Caco-2 (cell line): ENCODE measurements at regions of chr6 and their contacts with region 1.

Region 1: DNA sequence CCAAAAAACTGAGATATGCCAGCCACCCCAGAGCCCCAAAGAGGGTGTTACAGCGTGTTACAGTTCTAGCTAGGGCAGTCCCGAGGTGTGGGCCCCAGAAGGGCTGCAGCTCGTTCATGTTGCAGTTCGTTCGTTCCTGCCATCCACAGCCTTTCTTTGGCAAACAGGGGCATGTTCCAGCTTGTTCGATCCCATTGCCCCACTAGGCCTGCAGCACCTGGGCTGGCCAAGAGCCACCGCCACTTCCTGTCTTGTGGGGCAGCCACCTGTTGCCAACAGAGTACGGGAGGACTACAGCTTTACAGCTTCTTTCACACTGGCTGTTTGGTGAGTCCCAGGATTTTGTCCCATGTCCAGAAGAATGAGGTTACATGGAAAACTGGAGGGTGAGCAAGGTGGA is 198.1 kb downstream of the MMUT start:
- DNase-seq: no peak
- H3K4me3 ChIP-seq: no peak overlapping the region
- H3K4me3 Mint-ChIP-seq: no peak overlapping the region
- H3K27ac Mint-ChIP-seq: no peak overlapping the region
- H3K4me1 ChIP-seq: no peaks in the 10 kb centered on the region
- H3K4me1 Mint-ChIP-seq: no peaks in the 10 kb centered on the region
- H3K27me3 ChIP-seq: no peaks in the 10 kb centered on the region
- H3K27me3 Mint-ChIP-seq: no peaks in the 10 kb centered on the region
- CTCF ChIP-seq: no peak

Region 2: GRCh38 chr6:47794577-47795135 is 1470.3 kb before region 1 on chr6:
- CTCF ChIA-PET with region 1: no interaction called
- POLR2A ChIA-PET with region 1: no interaction called
- intact Hi-C with region 1: loop called (anchors 5 kb)
- DNase-seq: no peak
- H3K4me3 ChIP-seq: no peak overlapping the region
- H3K4me3 Mint-ChIP-seq: no peak overlapping the region
- H3K27ac Mint-ChIP-seq: no peak overlapping the region
- H3K4me1 ChIP-seq: no peaks in the 10 kb centered on the region
- H3K4me1 Mint-ChIP-seq: no peaks in the 10 kb centered on the region
- H3K27me3 ChIP-seq: no peaks in the 10 kb centered on the region; the same call in 1 of the 2 replicates
- H3K27me3 Mint-ChIP-seq: peaks cover 4% of the 10 kb centered on the region
- CTCF ChIP-seq: no peak

Region 3: GRCh38 chr6:49284180-49284579 is 19.3 kb after region 1 on chr6:
- CTCF ChIA-PET with region 1: no interaction called
- POLR2A ChIA-PET with region 1: no interaction called
- intact Hi-C with region 1: no loop called
- DNase-seq: no peak
- H3K4me3 ChIP-seq: no peak overlapping the region
- H3K4me3 Mint-ChIP-seq: no peak overlapping the region
- H3K27ac Mint-ChIP-seq: no peak overlapping the region
- H3K4me1 ChIP-seq: no peaks in the 10 kb centered on the region
- H3K4me1 Mint-ChIP-seq: no peaks in the 10 kb centered on the region
- H3K27me3 ChIP-seq: no peaks in the 10 kb centered on the region
- H3K27me3 Mint-ChIP-seq: no peaks in the 10 kb centered on the region
- CTCF ChIP-seq: no peak